Activated B cell treated with CpG ODN at 0.5 μM for 24 hours (primary cell): ENCODE measurements at regions of chr19 and their contacts with region 1.

Region 1: GRCh38 chr19:23070353-23071146 is 46.3 kb upstream of the ZNF730 start:
- DNase-seq: no peak
- ATAC-seq: no peak
- H3K4me3 Mint-ChIP-seq: peak overlapping the region; percentile 52
- H3K27ac Mint-ChIP-seq: no peak overlapping the region
- H3K4me1 Mint-ChIP-seq: peaks cover 12% of the 10 kb centered on the region
- H3K27me3 Mint-ChIP-seq: peaks cover 21% of the 10 kb centered on the region
- CTCF ChIP-seq: no peak

Region 2: GRCh38 chr19:23273590-23274413 is 203.3 kb after region 1 on chr19:
- CTCF ChIA-PET with region 1: no interaction called
- POLR2A ChIA-PET with region 1: no interaction called
- intact Hi-C with region 1: loop called (anchors 5 kb)
- DNase-seq: peak; percentile 89
- ATAC-seq: peak; percentile 98
- H3K4me3 Mint-ChIP-seq: peak overlapping the region; percentile 97
- H3K27ac Mint-ChIP-seq: peak overlapping the region; percentile 90
- H3K4me1 Mint-ChIP-seq: peaks cover 30% of the 10 kb centered on the region
- H3K27me3 Mint-ChIP-seq: no peaks in the 10 kb centered on the region
- CTCF ChIP-seq: no peak